ENCODE measurements at regions of chr12 and their contacts with region 1.

Region 1: GRCh38 chr12:84270470-84271140 is 642.0 kb downstream of the SLC6A15 start:
- DNase-seq: no peak
- ATAC-seq: no peak
- H3K4me3 ChIP-seq: no peak overlapping the region
- H3K4me3 Mint-ChIP-seq: no peak overlapping the region
- H3K27ac ChIP-seq: no peak overlapping the region
- H3K27ac Mint-ChIP-seq: no peak overlapping the region
- H3K4me1 ChIP-seq: no peaks in the 10 kb centered on the region
- H3K4me1 Mint-ChIP-seq: no peaks in the 10 kb centered on the region
- H3K27me3 ChIP-seq: no peaks in the 10 kb centered on the region
- H3K27me3 Mint-ChIP-seq: no peaks in the 10 kb centered on the region
- CTCF ChIP-seq: no peak

Region 2: GRCh38 chr12:83850531-83850930 is 420.1 kb before region 1 on chr12:
- CTCF ChIA-PET with region 1: no interaction called
- POLR2A ChIA-PET with region 1: no interaction called
- intact Hi-C with region 1: no loop called
- DNase-seq: no peak
- ATAC-seq: no peak
- H3K4me3 ChIP-seq: no peak overlapping the region
- H3K4me3 Mint-ChIP-seq: no peak overlapping the region
- H3K27ac ChIP-seq: no peak overlapping the region
- H3K27ac Mint-ChIP-seq: no peak overlapping the region
- H3K4me1 ChIP-seq: no peaks in the 10 kb centered on the region
- H3K4me1 Mint-ChIP-seq: no peaks in the 10 kb centered on the region
- H3K27me3 ChIP-seq: no peaks in the 10 kb centered on the region
- H3K27me3 Mint-ChIP-seq: no peaks in the 10 kb centered on the region
- CTCF ChIP-seq: no peak

Region 3: DNA sequence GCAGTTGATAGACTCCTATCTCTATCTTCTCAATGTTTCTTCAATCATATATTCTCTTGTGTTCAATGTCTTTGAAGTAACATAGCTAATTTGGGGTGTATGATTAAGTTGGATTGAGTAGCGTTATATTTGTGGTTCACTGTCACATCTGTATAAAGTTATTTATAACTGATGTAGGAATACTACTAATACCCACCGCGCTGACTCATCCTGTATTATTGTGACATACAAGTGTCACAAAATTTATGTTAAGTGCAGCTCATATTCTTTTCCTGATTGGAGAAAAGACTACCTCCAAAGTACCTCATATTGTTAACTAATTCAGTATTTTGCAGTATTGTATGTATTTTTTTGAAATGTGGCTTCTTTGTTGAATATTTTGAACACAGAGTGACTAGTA is 298.8 kb before region 1 on chr12:
- CTCF ChIA-PET with region 1: no interaction called
- POLR2A ChIA-PET with region 1: no interaction called
- intact Hi-C with region 1: no loop called
- DNase-seq: no peak
- ATAC-seq: no peak
- H3K4me3 ChIP-seq: no peak overlapping the region
- H3K4me3 Mint-ChIP-seq: no peak overlapping the region
- H3K27ac ChIP-seq: no peak overlapping the region
- H3K27ac Mint-ChIP-seq: no peak overlapping the region
- H3K4me1 ChIP-seq: no peaks in the 10 kb centered on the region
- H3K4me1 Mint-ChIP-seq: no peaks in the 10 kb centered on the region
- H3K27me3 ChIP-seq: no peaks in the 10 kb centered on the region
- H3K27me3 Mint-ChIP-seq: no peaks in the 10 kb centered on the region
- CTCF ChIP-seq: no peak

Region 4: GRCh38 chr12:84247931-84248330 is 22.7 kb before region 1 on chr12:
- CTCF ChIA-PET with region 1: no interaction called
- POLR2A ChIA-PET with region 1: interaction called, 3 read pairs
- intact Hi-C with region 1: loop called in 1 of 2 experiments (anchors 1 kb)
- DNase-seq: no peak
- ATAC-seq: no peak
- H3K4me3 ChIP-seq: no peak overlapping the region
- H3K4me3 Mint-ChIP-seq: no peak overlapping the region
- H3K27ac ChIP-seq: no peak overlapping the region
- H3K27ac Mint-ChIP-seq: no peak overlapping the region
- H3K4me1 ChIP-seq: no peaks in the 10 kb centered on the region
- H3K4me1 Mint-ChIP-seq: no peaks in the 10 kb centered on the region
- H3K27me3 ChIP-seq: no peaks in the 10 kb centered on the region
- H3K27me3 Mint-ChIP-seq: no peaks in the 10 kb centered on the region
- CTCF ChIP-seq: no peak

Region 5: GRCh38 chr12:84596266-84596665 is 325.7 kb after region 1 on chr12:
- CTCF ChIA-PET with region 1: no interaction called
- POLR2A ChIA-PET with region 1: no interaction called
- intact Hi-C with region 1: no loop called
- DNase-seq: no peak
- ATAC-seq: no peak
- H3K4me3 ChIP-seq: no peak overlapping the region
- H3K4me3 Mint-ChIP-seq: no peak overlapping the region
- H3K27ac ChIP-seq: no peak overlapping the region
- H3K27ac Mint-ChIP-seq: no peak overlapping the region
- H3K4me1 ChIP-seq: no peaks in the 10 kb centered on the region
- H3K4me1 Mint-ChIP-seq: no peaks in the 10 kb centered on the region
- H3K27me3 ChIP-seq: no peaks in the 10 kb centered on the region
- H3K27me3 Mint-ChIP-seq: no peaks in the 10 kb centered on the region
- CTCF ChIP-seq: no peak

Region 6: GRCh38 chr12:85260904-85261303 is 990.3 kb after region 1 on chr12:
- CTCF ChIA-PET with region 1: no interaction called
- POLR2A ChIA-PET with region 1: no interaction called
- intact Hi-C with region 1: no loop called
- DNase-seq: no peak
- ATAC-seq: no peak
- H3K4me3 ChIP-seq: no peak overlapping the region
- H3K4me3 Mint-ChIP-seq: no peak overlapping the region
- H3K27ac ChIP-seq: no peak overlapping the region
- H3K27ac Mint-ChIP-seq: no peak overlapping the region
- H3K4me1 ChIP-seq: no peaks in the 10 kb centered on the region
- H3K4me1 Mint-ChIP-seq: no peaks in the 10 kb centered on the region
- H3K27me3 ChIP-seq: no peaks in the 10 kb centered on the region
- H3K27me3 Mint-ChIP-seq: no peaks in the 10 kb centered on the region
- CTCF ChIP-seq: no peak